Endothelial cell of umbilical vein (primary cell): ENCODE measurements at regions of chr3 and their contacts with region 1.

Region 1: GRCh38 chr3:132783152-132783551 is 60.9 kb upstream of the NPHP3 start:
- DNase-seq: no peak
- H3K4me3 ChIP-seq: no peak overlapping the region
- H3K27ac ChIP-seq: no peak overlapping the region
- H3K4me1 ChIP-seq: peaks cover 2% of the 10 kb centered on the region
- H3K27me3 ChIP-seq: no peaks in the 10 kb centered on the region
- CTCF ChIP-seq: no peak
- POLR2A ChIP-seq: no peak

Region 2: DNA sequence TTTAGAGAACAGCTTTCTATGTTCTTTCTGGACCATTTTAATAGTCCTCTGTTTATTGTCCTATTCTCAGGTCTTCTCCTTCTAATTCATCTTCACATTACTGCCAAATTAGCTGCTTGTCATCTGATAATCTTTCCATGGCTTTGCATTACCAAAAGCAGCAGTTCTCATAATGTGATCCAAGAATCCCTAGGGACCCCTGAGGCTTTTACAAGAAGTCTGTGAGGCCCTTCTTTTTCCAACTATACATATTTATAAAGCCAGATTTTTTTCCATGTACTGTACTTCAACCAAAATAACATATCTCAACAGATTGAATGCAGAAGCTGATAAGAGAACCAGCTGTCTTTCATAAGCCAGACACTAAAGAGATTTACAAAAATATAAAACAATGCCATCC is 454.2 kb after region 1 on chr3:
- CTCF ChIA-PET with region 1: no interaction called
- POLR2A ChIA-PET with region 1: interaction called, 14 read pairs
- dilution Hi-C with region 1: no loop called
- intact Hi-C with region 1: no loop called
- DNase-seq: no peak
- H3K4me3 ChIP-seq: no peak overlapping the region
- H3K27ac ChIP-seq: no peak overlapping the region
- H3K4me1 ChIP-seq: no peaks in the 10 kb centered on the region
- H3K27me3 ChIP-seq: no peaks in the 10 kb centered on the region
- CTCF ChIP-seq: no peak
- POLR2A ChIP-seq: no peak